Vagina (tissue), 2 donors: ENCODE measurements at regions of chr10 and their contacts with region 1.

Region 1: GRCh38 chr10:79202188-79203013 is 133.6 kb downstream of the ZMIZ1 start:
- DNase-seq: no peak
- H3K4me3 ChIP-seq: no peak overlapping the region
- H3K27ac ChIP-seq: peak overlapping the region; percentile 48
- H3K4me1 ChIP-seq: peaks cover 34% of the 10 kb centered on the region
- H3K27me3 ChIP-seq: no peaks in the 10 kb centered on the region
- CTCF ChIP-seq: peak in 1 of 3 experiments; percentile 18
- POLR2A ChIP-seq: no peak

Region 2: DNA sequence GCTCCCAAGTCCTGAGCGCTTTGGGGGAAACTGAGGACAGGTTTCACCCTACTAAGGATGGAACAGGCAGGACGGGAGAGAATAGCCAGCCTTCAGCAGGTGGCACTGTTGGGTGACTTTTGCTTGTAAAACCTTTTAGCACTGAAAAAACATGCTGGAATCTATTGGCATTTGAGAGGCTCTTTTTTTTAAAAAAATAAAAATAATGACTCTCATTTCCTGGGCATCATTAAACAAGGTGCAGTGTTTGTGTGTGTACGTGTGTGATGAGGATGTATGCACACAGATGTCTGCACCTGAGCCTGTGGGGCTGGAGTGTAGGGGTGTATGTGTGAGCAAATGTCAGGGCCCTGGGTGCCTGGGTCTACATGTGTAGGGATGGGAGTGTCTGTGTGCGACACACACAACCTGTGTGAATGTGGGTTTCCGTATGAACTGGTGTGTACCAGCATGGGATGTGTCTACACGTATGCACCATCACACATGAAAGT is 990.8 kb before region 1 on chr10:
- intact Hi-C with region 1: loop called (anchors 5 kb)
- DNase-seq: no peak
- H3K4me3 ChIP-seq: no peak overlapping the region
- H3K27ac ChIP-seq: no peak overlapping the region
- H3K4me1 ChIP-seq: peaks cover 28% of the 10 kb centered on the region
- H3K27me3 ChIP-seq: no peaks in the 10 kb centered on the region
- CTCF ChIP-seq: no peak
- POLR2A ChIP-seq: no peak

Region 3: GRCh38 chr10:79059859-79060379 is 142.5 kb before region 1 on chr10:
- intact Hi-C with region 1: no loop called
- DNase-seq: no peak
- H3K4me3 ChIP-seq: no peak overlapping the region
- H3K27ac ChIP-seq: no peak overlapping the region
- H3K4me1 ChIP-seq: no peaks in the 10 kb centered on the region
- H3K27me3 ChIP-seq: no peaks in the 10 kb centered on the region
- CTCF ChIP-seq: no peak
- POLR2A ChIP-seq: no peak

Region 4: DNA sequence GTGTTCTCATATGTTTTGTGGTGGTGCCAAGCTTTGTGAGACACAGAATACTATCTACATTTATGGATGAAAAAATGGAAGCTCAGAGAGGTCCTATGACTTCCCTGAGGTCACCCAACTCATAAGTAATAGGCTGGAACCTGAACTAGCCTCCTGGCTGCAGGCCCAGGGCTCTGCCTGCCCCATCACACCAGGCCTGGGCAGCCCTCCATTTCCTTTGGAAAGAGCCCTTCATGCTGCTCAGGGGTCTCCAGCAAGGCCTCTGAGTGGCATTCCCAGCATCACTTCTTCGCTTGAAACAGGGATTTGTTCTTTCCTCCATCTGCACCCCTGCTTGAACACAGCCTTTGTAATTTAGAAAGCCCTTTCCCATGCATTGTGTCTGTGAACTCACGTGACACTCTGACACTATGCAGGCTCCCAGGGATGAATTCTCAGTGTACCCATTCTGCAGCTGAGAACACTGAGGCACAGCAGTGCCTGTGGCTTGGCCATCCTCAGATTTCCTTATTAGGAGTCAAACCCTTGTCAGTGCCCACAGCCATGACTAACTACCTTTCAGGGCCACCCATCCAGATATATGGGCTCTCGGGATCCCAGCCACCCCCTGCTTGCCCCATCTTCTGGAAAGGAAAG is 17.0 kb after region 1 on chr10:
- intact Hi-C with region 1: no loop called
- DNase-seq: no peak
- H3K4me3 ChIP-seq: no peak overlapping the region
- H3K27ac ChIP-seq: peak overlapping the region; percentile 22
- H3K4me1 ChIP-seq: peaks cover 58% of the 10 kb centered on the region
- H3K27me3 ChIP-seq: no peaks in the 10 kb centered on the region
- CTCF ChIP-seq: no peak
- POLR2A ChIP-seq: no peak